ENCODE measurements at regions of chrX and their contacts with region 1.

Region 1: GRCh38 chrX:51641421-51642021 is 22.8 kb upstream of the CENPVL3 start:
- DNase-seq: no peak
- ATAC-seq: no peak
- H3K4me3 ChIP-seq: no peak overlapping the region
- H3K27ac ChIP-seq: no peak overlapping the region
- H3K4me1 ChIP-seq: no peaks in the 10 kb centered on the region
- H3K27me3 ChIP-seq: peaks cover 0 to 66% (median 0%) of the 10 kb centered on the region in 9 donors
- CTCF ChIP-seq: peak in 10 of 12 donors; percentile 9 to 39 (median 27)
- POLR2A ChIP-seq: no peak

Region 2: GRCh38 chrX:51860679-51861078 is 219.2 kb after region 1 on chrX:
- intact Hi-C with region 1: loop called in 1 of 10 experiments (anchors 5 kb)
- DNase-seq: peak in 1 of 5 donors; percentile 19
- ATAC-seq: peak in 1 of 4 donors; percentile 54
- H3K4me3 ChIP-seq: no peak overlapping the region
- H3K27ac ChIP-seq: no peak overlapping the region
- H3K4me1 ChIP-seq: no peaks in the 10 kb centered on the region
- H3K27me3 ChIP-seq: no peaks in the 10 kb centered on the region
- CTCF ChIP-seq: peak in 11 of 12 donors; percentile 15 to 56 (median 43)
- POLR2A ChIP-seq: no peak

Measured in heart left ventricle (tissue), 16 donors.